Activated CD4-positive, alpha-beta T cell treated with anti-CD3 and anti-CD28 coated beads for 36 hours (primary cell): ENCODE measurements at regions of chr11 and their contacts with region 1.

Region 1: GRCh38 chr11:129815596-129816461 is at the start of gene TMEM45B:
- DNase-seq: peak; percentile 62
- ATAC-seq: peak; percentile 63
- H3K4me3 Mint-ChIP-seq: peak within 1 kb of the TSS; percentile 72
- H3K27ac Mint-ChIP-seq: peak within 1 kb of the TSS; percentile 64
- H3K4me1 Mint-ChIP-seq: peaks cover 24% of the 10 kb centered on the region
- H3K27me3 Mint-ChIP-seq: peaks cover 12% of the 10 kb centered on the region
- total RNA-seq, gene TMEM45B: 2.1 to 3.1 TPM

Region 2: DNA sequence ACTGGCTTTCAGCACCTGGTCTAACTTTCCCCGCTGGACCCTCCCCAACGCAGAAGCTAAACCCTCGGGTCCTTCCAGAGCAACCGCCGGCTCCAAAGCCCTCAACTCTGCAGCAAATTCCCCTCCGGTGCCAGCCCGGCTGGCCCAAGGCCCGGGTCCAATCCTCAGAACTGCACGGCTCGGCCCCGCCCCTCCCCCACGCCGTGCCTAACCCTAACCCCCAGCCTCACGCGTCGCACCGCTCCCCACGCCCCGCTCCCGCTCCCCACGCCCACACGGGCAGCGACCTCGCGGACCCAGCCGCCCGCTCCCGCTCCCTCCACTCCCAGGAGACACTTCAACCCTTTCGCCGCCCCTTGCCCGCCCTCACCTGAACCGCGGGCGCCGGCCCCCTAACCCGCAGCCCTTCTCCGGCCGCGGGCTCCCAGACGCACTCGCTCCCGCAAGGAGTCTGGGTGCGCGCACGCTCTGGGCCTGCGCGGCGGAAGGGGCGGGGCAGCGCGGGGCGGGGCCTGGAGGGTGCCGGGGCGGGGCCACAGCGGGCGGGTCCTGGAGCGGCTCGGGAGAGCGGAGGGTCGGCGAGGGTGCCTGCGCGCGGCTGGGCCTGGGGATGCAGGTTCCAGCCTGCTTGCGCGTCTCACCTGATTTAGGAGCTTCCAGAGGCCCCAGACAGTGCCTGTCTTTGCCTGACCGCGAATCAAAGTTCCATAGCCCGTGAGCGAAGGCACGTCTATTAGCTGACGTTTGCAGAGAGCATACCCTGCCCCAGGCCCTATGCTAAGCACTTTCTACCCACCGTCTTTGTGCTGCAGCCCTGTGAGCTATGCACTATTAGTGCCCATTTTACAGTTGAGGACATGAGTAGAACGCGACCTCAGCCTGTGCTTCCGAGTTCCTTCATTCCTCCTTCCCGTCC is 79.6 kb after region 1 on chr11 and contains the start of gene NFRKB:
- CTCF ChIA-PET with region 1: no interaction called
- POLR2A ChIA-PET with region 1: no interaction called
- intact Hi-C with region 1: loop called in 1 of 2 experiments (anchors 1 kb)
- DNase-seq: peak; percentile 94
- ATAC-seq: peak; percentile 99
- H3K4me3 Mint-ChIP-seq: peak within 1 kb of the TSS; percentile 84
- H3K27ac Mint-ChIP-seq: peak within 1 kb of the TSS; percentile 71
- H3K4me1 Mint-ChIP-seq: peaks cover 41% of the 10 kb centered on the region
- H3K27me3 Mint-ChIP-seq: no peaks in the 10 kb centered on the region
- total RNA-seq, gene NFRKB: 27.3 to 31.0 TPM